ENCODE measurements at regions of chr6 and their contacts with region 1.

Region 1: DNA sequence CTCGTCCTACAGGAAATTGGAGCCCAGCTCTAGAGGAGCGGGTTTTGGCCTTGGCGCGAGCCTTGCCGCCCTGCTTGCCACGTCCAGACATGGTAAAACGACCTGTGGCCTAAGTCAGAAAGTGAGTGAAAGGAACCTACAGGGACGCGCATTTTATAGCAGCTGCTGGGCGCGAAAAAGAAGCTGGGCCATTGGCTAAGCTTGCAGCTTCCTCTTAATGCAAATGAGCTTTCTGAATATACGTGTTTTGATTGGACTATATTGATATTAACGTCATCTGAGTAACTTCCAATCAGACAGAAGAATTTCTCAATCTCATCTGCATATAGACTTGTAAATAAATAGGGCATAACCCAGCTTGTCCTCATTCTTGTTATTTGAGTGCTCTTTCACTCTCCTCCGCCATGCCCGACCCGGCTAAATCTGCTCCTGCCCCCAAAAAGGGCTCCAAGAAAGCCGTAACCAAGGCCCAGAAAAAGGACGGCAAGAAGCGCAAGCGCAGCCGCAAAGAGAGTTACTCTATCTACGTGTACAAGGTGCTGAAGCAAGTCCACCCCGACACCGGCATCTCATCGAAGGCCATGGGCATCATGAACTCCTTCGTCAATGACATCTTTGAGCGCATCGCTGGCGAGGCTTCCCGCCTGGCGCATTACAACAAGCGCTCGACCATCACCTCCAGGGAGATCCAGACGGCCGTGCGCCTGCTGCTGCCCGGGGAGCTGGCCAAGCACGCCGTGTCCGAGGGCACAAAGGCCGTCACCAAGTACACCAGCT is 18.9 kb downstream of the OR2B2 start:
- DNase-seq: peak; percentile 95
- H3K4me3 Mint-ChIP-seq: no peak overlapping the region
- H3K27ac Mint-ChIP-seq: no peak overlapping the region
- H3K4me1 Mint-ChIP-seq: peaks cover 54% of the 10 kb centered on the region
- H3K27me3 Mint-ChIP-seq: no peaks in the 10 kb centered on the region

Region 2: DNA sequence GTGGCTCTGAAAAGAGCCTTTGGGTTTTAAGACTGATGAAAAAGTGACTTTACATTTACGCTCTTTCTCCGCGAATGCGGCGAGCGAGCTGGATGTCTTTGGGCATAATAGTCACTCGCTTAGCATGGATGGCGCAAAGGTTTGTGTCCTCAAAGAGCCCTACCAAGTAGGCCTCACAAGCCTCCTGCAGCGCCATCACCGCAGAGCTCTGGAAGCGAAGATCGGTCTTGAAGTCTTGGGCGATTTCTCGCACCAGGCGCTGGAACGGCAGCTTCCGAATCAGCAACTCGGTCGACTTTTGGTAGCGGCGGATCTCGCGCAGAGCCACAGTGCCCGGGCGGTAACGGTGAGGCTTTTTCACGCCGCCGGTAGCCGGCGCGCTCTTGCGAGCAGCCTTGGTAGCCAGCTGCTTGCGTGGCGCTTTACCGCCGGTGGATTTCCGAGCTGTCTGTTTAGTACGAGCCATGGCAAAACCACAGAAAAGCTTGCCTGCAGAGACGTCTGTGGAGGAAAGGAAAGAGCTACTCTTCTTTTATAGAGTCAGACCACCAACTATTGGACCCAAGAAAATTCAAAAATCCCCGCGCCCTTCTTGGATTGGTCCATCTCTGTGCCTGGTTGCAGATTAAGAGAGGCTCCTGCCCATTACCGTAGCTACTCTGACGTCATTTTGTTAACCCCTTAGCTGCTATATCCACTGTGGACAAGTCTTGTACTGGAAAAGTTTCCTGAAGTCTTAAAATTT is 1861.5 kb before region 1 on chr6:
- CTCF ChIA-PET with region 1: interaction called, 4 read pairs
- POLR2A ChIA-PET with region 1: interaction called, 46 read pairs
- DNase-seq: peak; percentile 92
- H3K4me3 Mint-ChIP-seq: peak overlapping the region; percentile 84
- H3K27ac Mint-ChIP-seq: peak overlapping the region; percentile 100
- H3K4me1 Mint-ChIP-seq: peaks cover 74% of the 10 kb centered on the region
- H3K27me3 Mint-ChIP-seq: peaks cover 4% of the 10 kb centered on the region

Region 3: DNA sequence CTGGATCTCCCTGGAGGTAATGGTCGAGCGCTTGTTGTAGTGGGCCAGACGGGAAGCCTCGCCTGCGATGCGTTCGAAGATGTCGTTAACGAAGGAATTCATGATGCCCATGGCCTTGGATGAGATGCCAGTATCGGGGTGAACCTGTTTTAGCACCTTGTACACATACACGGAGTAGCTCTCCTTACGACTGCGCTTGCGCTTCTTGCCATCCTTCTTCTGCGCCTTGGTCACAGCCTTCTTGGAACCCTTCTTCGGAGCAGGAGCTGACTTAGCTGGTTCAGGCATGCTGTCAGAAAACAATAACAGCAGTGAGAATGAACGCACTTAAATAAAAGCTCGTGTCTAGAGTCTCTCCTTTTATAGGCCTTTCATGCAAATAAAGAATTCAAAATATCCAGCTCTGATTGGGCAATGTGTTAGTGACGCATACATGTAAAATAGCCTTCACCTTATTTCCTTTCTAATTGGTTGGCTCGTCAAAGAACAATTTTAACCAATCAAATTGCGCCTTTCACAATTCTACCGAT is 1676.8 kb before region 1 on chr6:
- CTCF ChIA-PET with region 1: no interaction called
- POLR2A ChIA-PET with region 1: interaction called, 18 read pairs
- DNase-seq: peak; percentile 90
- H3K4me3 Mint-ChIP-seq: no peak overlapping the region
- H3K27ac Mint-ChIP-seq: no peak overlapping the region
- H3K4me1 Mint-ChIP-seq: peaks cover 28% of the 10 kb centered on the region
- H3K27me3 Mint-ChIP-seq: no peaks in the 10 kb centered on the region

Region 4: DNA sequence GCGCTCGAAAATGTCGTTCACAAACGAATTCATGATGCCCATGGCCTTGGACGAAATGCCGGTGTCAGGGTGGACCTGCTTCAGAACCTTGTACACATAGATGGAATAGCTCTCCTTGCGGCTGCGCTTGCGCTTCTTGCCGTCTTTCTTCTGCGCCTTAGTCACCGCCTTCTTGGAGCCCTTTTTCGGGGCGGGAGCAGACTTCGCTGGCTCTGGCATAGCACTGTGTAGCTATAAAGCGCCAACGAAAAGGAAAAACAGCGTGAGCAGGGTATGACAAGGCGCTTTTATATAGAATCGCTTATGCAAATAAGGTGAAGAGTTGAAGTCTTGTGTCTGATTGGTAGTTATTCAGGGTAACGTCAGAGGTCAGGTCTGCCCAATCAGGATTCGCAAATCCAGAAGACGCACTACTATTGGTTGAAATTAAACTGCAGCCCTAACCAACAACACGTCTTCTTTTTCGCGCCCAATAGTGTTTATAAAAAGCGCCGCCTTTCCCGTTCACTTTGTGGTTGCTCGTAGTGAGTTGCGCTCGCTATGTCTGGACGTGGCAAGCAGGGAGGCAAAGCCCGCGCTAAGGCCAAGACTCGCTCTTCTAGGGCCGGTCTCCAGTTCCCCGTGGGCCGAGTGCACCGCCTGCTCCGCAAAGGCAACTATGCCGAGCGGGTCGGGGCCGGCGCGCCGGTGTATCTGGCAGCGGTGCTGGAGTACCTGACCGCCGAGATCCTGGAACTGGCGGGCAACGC is 760.5 kb before region 1 on chr6:
- CTCF ChIA-PET with region 1: interaction called, 8 read pairs
- POLR2A ChIA-PET with region 1: interaction called, 167 read pairs
- DNase-seq: peak; percentile 95
- H3K4me3 Mint-ChIP-seq: no peak overlapping the region
- H3K27ac Mint-ChIP-seq: no peak overlapping the region
- H3K4me1 Mint-ChIP-seq: peaks cover 60% of the 10 kb centered on the region
- H3K27me3 Mint-ChIP-seq: no peaks in the 10 kb centered on the region

Region 5: DNA sequence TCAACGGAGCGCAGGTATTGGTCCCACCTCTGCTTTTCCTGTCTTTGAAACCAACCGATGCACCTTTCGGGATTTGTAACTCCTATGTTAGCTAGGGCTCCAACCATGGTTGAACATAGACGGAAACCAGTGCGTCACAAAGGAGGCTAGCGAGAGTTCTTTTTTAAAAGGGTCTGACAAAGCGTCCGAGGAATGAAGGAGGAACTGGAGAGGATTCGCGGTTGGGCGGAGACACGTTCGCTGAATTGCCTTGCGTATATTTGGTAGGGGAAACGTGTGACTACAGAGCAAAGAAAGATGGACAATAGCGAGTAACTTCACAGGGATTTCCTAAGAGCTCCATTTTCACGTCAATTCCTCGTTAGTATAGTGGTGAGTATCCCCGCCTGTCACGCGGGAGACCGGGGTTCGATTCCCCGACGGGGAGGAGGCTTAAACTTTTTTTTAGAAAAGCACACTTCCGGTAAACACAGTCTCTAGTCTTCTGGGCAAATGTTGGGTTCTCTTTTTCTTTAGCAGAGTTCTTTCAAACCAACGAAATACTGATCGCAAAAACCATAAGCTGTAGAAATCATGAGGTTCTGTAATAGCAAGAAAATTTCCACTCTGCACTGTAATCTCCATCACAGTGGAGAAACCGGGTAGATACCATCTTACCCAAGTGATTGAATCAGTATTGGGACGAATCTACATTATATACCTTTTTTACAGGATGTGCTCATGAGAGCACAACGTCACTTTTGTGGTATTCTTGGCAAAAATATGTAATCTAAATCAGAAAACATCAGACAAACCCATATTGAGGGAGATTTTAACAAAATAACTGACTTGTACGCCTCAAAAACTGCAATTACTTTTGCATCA is 413.7 kb before region 1 on chr6:
- CTCF ChIA-PET with region 1: no interaction called
- POLR2A ChIA-PET with region 1: interaction called, 15 read pairs
- DNase-seq: peak; percentile 86
- H3K4me3 Mint-ChIP-seq: no peak overlapping the region
- H3K27ac Mint-ChIP-seq: no peak overlapping the region
- H3K4me1 Mint-ChIP-seq: peaks cover 10% of the 10 kb centered on the region
- H3K27me3 Mint-ChIP-seq: peaks cover 4% of the 10 kb centered on the region

Region 6: GRCh38 chr6:27838058-27838944 is 54.9 kb before region 1 on chr6:
- CTCF ChIA-PET with region 1: interaction called, 49 read pairs
- POLR2A ChIA-PET with region 1: interaction called, 518 read pairs
- DNase-seq: peak; percentile 90
- H3K4me3 Mint-ChIP-seq: no peak overlapping the region
- H3K27ac Mint-ChIP-seq: no peak overlapping the region
- H3K4me1 Mint-ChIP-seq: peaks cover 31% of the 10 kb centered on the region
- H3K27me3 Mint-ChIP-seq: no peaks in the 10 kb centered on the region

Region 7: GRCh38 chr6:27931209-27931608 is 38.0 kb after region 1 on chr6:
- CTCF ChIA-PET with region 1: no interaction called
- POLR2A ChIA-PET with region 1: no interaction called
- DNase-seq: no peak
- H3K4me3 Mint-ChIP-seq: no peak overlapping the region
- H3K27ac Mint-ChIP-seq: no peak overlapping the region
- H3K4me1 Mint-ChIP-seq: no peaks in the 10 kb centered on the region
- H3K27me3 Mint-ChIP-seq: peaks cover 18% of the 10 kb centered on the region

Region 8: DNA sequence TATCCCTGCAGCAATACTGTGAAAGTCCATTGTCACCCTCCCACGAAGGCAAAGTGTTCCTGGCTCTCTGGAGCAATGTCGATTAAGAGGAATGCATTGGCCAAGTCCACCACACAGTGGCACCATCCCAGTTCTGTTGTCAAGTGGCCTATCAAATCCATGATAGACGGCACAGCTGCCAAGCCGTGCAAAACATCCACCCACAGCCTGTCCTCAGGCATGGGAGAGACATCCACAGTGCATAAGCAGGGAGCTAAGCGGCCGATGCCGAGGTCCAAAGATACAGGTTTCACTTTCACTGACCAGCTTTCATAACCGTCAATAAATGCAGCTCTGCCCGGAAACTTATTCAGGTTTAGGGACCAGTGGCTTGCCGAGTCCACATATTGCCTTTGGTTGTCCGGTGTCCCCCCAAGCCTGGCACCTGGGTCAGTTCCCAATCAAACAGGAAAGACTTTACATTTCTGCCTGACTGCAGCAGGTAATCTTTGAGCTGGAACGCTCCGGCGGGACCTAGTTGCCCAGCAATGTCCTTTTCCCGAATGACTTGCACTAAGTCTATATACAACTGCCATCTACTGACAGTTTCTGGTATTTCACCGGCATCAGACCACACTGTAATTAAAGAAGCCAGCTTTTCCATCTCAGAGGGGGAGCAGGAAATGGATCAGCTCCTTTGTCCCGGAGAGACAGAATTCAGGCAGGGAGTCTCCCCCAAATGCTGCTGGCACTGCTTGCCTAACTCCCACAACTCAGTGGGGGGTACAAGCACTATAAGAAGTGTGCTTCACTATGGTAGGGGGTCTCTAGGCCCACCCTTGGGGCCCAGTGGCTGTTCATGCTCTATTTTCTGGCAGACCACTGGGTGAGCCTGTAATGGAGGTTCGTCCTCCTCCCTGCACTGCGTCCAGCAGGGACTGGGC is 462.8 kb after region 1 on chr6:
- CTCF ChIA-PET with region 1: interaction called, 12 read pairs
- POLR2A ChIA-PET with region 1: interaction called, 8 read pairs
- DNase-seq: peak; percentile 61
- H3K4me3 Mint-ChIP-seq: peak overlapping the region; percentile 81
- H3K27ac Mint-ChIP-seq: peak overlapping the region; percentile 71
- H3K4me1 Mint-ChIP-seq: peaks cover 25% of the 10 kb centered on the region
- H3K27me3 Mint-ChIP-seq: no peaks in the 10 kb centered on the region

Measured in activated CD4-positive, alpha-beta memory T cell treated with anti-CD3 and anti-CD28 coated beads, Interleukin-2, amount 10 ng/mL, durations not matched to agents 7 days and 5 days (primary cell).